Spleen (tissue), 13 donors: ENCODE measurements at regions of chr15 and their contacts with region 1.

Region 1: DNA sequence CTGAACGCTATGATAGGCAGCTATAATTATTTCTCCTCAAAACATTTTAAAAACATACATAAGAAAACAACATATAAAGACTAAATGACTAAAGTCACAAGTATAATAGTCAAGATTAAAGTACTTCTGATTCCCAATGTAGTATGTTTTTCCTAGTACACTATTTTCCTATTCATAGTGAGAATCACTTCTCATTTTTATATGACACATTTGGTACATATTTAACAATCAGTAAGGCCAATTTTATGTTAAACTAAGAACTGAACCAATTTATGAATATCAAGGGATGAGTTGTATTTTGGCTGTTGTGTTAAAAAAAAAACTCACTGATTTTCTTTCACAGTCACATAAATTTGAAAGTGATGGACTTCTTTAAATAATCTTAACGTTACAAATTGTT is 79.7 kb downstream of the DENND4A start:
- DNase-seq: no peak
- H3K4me3 ChIP-seq: no peak overlapping the region
- H3K27ac ChIP-seq: no peak overlapping the region
- H3K4me1 ChIP-seq: no peaks in the 10 kb centered on the region
- H3K27me3 ChIP-seq: no peaks in the 10 kb centered on the region
- CTCF ChIP-seq: no peak
- POLR2A ChIP-seq: no peak

Region 2: GRCh38 chr15:65766422-65767263 is 54.2 kb after region 1 on chr15:
- intact Hi-C with region 1: loop called (anchors 10 kb)
- DNase-seq: no peak
- H3K4me3 ChIP-seq: no peak overlapping the region
- H3K27ac ChIP-seq: no peak overlapping the region
- H3K4me1 ChIP-seq: peaks cover 5 to 98% (median 45%) of the 10 kb centered on the region in 6 donors
- H3K27me3 ChIP-seq: no peaks in the 10 kb centered on the region
- CTCF ChIP-seq: no peak
- POLR2A ChIP-seq: no peak

Region 3: GRCh38 chr15:65841121-65841925 is 128.9 kb after region 1 on chr15:
- intact Hi-C with region 1: no loop called
- DNase-seq: no peak
- H3K4me3 ChIP-seq: peak overlapping the region in 2 of 8 donors; percentile 25 to 33
- H3K27ac ChIP-seq: peak overlapping the region in 6 of 8 donors; percentile 1 to 69 (median 46)
- H3K4me1 ChIP-seq: peaks cover 3 to 40% (median 18%) of the 10 kb centered on the region in 6 donors
- H3K27me3 ChIP-seq: no peaks in the 10 kb centered on the region
- CTCF ChIP-seq: no peak
- POLR2A ChIP-seq: no peak

Region 4: GRCh38 chr15:65952425-65953053 is 240.1 kb after region 1 on chr15:
- intact Hi-C with region 1: no loop called
- DNase-seq: peak; percentile 23
- H3K4me3 ChIP-seq: no peak overlapping the region
- H3K27ac ChIP-seq: no peak overlapping the region
- H3K4me1 ChIP-seq: no peaks in the 10 kb centered on the region
- H3K27me3 ChIP-seq: peaks cover 0 to 15% (median 0%) of the 10 kb centered on the region in 7 donors
- CTCF ChIP-seq: no peak
- POLR2A ChIP-seq: no peak